ENCODE measurements at regions of chr3 and their contacts with region 1.

Region 1: GRCh38 chr3:197736491-197737318 is at the start of gene RUBCN:
- DNase-seq: peak; percentile 97
- ATAC-seq: peak; percentile 97
- H3K4me3 Mint-ChIP-seq: peak within 1 kb of the TSS; percentile 85
- H3K27ac Mint-ChIP-seq: peak within 1 kb of the TSS; percentile 95
- H3K4me1 Mint-ChIP-seq: peaks cover 32% of the 10 kb centered on the region
- H3K27me3 Mint-ChIP-seq: no peaks in the 10 kb centered on the region
- total RNA-seq, gene RUBCN: 22.7 to 23.4 TPM

Region 2: GRCh38 chr3:197298341-197298857 is 438.3 kb before region 1 on chr3 and contains the start of gene DLG1:
- CTCF ChIA-PET with region 1: no interaction called
- POLR2A ChIA-PET with region 1: no interaction called
- intact Hi-C with region 1: loop called in 1 of 2 experiments (anchors 5 kb)
- DNase-seq: peak; percentile 93
- ATAC-seq: peak; percentile 81
- H3K4me3 Mint-ChIP-seq: peak within 1 kb of the TSS; percentile 92
- H3K27ac Mint-ChIP-seq: peak within 1 kb of the TSS; percentile 93
- H3K4me1 Mint-ChIP-seq: peaks cover 23% of the 10 kb centered on the region
- H3K27me3 Mint-ChIP-seq: peaks cover 20% of the 10 kb centered on the region
- total RNA-seq, gene DLG1: 58.8 to 78.4 TPM

Region 3: DNA sequence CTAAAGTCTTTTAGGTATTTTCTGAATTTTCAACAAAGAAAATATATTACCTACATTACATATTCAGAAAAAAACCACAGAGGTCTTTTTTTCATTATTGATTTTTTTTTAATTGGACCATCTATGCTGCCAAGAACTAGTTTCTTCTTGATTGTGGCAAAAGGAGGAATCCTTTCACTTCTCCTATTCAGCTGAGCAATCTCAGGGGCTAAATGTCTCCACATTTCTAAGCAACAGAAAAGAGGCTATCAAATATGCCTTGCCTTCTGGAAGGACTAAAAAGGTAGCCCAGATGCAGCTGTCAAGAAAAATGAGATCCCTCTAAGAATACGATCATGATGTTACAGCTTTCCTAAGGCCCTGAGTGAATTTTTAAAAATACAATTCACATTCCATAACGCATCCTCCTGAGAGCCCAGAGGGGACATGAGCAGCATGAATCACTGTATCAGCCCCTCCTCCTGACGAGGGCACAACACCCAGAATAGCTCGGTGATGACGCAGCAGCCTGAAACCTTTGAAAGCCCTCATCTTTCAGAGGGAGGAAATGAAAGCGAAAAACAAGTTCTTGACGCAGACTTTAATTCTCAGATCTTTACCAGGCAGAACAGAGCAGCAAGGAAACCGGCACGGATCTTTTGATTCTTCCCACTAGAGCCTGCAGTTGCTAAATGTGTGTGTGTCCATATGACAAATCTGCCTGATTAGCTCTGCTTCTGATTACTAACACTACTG is 24.6 kb before region 1 on chr3:
- CTCF ChIA-PET with region 1: interaction called, 7 read pairs
- POLR2A ChIA-PET with region 1: interaction called, 8 read pairs
- intact Hi-C with region 1: loop called (anchors 1 kb)
- DNase-seq: peak; percentile 94
- ATAC-seq: peak; percentile 98
- H3K4me3 Mint-ChIP-seq: peak overlapping the region; percentile 51
- H3K27ac Mint-ChIP-seq: peak overlapping the region; percentile 89
- H3K4me1 Mint-ChIP-seq: peaks cover 36% of the 10 kb centered on the region
- H3K27me3 Mint-ChIP-seq: no peaks in the 10 kb centered on the region

Region 4: GRCh38 chr3:197791113-197791891 is 54.6 kb after region 1 on chr3 and contains the start of gene LRCH3:
- CTCF ChIA-PET with region 1: no interaction called
- POLR2A ChIA-PET with region 1: interaction called, 3 read pairs
- intact Hi-C with region 1: loop called (anchors 1 to 2 kb)
- DNase-seq: peak; percentile 88
- ATAC-seq: peak; percentile 70
- H3K4me3 Mint-ChIP-seq: peak within 1 kb of the TSS; percentile 97
- H3K27ac Mint-ChIP-seq: peak within 1 kb of the TSS; percentile 97
- H3K4me1 Mint-ChIP-seq: peaks cover 48% of the 10 kb centered on the region
- H3K27me3 Mint-ChIP-seq: no peaks in the 10 kb centered on the region
- total RNA-seq, gene LRCH3: 43.6 to 77.5 TPM

Region 5: GRCh38 chr3:197959898-197960693 is 223.4 kb after region 1 on chr3 and contains the start of gene LMLN:
- CTCF ChIA-PET with region 1: no interaction called
- POLR2A ChIA-PET with region 1: no interaction called
- intact Hi-C with region 1: loop called in 1 of 2 experiments (anchors 1 kb)
- DNase-seq: peak; percentile 98
- ATAC-seq: peak; percentile 91
- H3K4me3 Mint-ChIP-seq: peak within 1 kb of the TSS; percentile 84
- H3K27ac Mint-ChIP-seq: peak within 1 kb of the TSS; percentile 96
- H3K4me1 Mint-ChIP-seq: peaks cover 52% of the 10 kb centered on the region
- H3K27me3 Mint-ChIP-seq: no peaks in the 10 kb centered on the region
- total RNA-seq, gene LMLN: 4.3 to 7.7 TPM